Posterior vena cava (tissue), 2 donors: ENCODE measurements at regions of chr17 and their contacts with region 1.

Region 1: GRCh38 chr17:73446617-73447016 is 134.8 kb upstream of the CDC42EP4 start:
- DNase-seq: peak; percentile 37

Region 2: DNA sequence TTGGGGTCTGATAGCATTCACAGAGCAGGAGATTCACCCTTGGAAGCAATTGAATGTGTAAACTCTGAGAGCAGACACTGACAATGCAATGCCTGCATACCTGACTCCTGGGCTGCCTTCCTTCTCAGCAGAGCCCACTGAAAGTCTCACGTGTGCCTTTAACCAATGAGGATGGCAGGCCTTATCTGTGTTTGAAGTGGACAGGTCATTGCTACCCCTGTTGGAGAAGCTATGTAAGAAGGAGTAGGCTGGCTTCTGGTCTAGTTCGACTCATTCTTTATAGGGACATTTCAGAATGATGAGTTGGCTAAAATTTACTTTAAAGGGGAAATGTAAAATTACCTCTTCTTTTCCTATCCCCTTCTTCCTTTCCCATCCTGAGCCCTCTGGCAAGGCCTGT is 800.4 kb before region 1 on chr17:
- intact Hi-C with region 1: loop called in 1 of 2 experiments (anchors 5 kb)
- DNase-seq: no peak